ENCODE measurements at regions of chr1 and their contacts with region 1.

Region 1: DNA sequence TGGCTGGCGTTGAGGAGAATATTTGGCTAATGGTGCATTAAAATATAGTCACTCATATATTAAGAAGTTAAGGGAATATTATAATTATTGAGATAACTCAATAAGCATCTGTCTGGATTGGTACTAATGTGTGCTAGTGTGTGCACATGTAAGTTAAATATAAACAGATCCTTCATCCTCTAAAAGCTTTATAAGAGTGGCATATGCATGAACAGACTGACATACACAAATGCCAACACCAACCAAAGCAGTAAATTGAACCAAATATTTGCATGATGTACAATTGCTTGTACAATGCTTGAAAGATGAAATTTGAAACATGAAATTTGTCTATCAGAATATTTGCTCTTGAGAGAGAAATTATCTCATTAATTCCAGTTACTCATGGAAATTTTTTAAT is 344.9 kb downstream of the ADGRL2 start:
- DNase-seq: no peak
- H3K4me3 ChIP-seq: no peak overlapping the region
- H3K27ac ChIP-seq: no peak overlapping the region
- H3K4me1 ChIP-seq: no peaks in the 10 kb centered on the region
- H3K27me3 ChIP-seq: no peaks in the 10 kb centered on the region
- CTCF ChIP-seq: no peak
- EP300 ChIP-seq: no peak
- POLR2A ChIP-seq: no peak

Region 2: DNA sequence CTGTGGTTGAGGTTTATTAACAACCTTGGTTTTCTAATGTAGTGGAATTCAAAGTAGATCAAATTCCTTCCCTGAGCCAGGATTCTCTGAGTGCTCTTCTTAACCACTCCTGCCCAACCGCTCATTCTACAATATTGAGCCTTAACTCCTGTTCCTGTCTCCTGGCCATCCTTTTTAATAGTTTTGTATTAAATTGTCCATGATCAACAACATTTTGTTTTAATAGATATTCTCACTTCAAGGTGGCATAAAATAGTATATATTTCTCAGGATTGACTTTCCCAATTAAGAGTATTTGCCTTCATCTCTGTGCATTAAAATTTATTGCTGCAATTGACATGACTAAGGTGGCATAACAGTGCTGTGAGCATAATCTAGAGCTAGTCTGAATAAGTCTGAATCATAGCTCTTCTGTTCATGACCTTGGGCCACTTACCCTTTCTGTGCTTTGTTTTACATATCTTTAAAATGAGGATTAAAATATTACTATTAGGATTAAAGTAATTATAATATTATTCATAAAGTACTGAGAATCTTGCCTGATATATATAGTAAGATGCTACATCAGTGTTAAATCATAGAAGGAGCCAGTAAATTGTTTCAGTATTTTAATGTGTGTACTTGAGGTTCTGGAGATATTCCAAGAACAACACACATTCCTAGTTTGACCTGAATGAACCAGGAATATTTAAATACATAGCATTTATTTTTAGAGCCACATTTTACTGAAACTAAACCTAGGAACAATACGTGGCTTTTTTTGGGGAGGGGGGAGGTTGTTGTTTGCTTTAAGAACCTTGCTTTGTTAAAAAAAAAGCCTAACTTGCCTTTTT is 268.5 kb before region 1 on chr1:
- intact Hi-C with region 1: no loop called
- DNase-seq: no peak
- H3K4me3 ChIP-seq: no peak overlapping the region
- H3K27ac ChIP-seq: no peak overlapping the region
- H3K4me1 ChIP-seq: peaks cover 8% of the 10 kb centered on the region
- H3K27me3 ChIP-seq: no peaks in the 10 kb centered on the region
- CTCF ChIP-seq: no peak
- EP300 ChIP-seq: no peak
- POLR2A ChIP-seq: no peak

Region 3: GRCh38 chr1:84020151-84020550 is 1874.5 kb after region 1 on chr1:
- intact Hi-C with region 1: loop called in 1 of 4 experiments (anchors 5 kb)
- DNase-seq: no peak
- H3K4me3 ChIP-seq: no peak overlapping the region
- H3K27ac ChIP-seq: no peak overlapping the region
- H3K4me1 ChIP-seq: no peaks in the 10 kb centered on the region
- H3K27me3 ChIP-seq: no peaks in the 10 kb centered on the region
- CTCF ChIP-seq: no peak
- EP300 ChIP-seq: no peak
- POLR2A ChIP-seq: no peak